Heart right ventricle (tissue), 16 donors: ENCODE measurements at regions of chr17 and their contacts with region 1.

Region 1: DNA sequence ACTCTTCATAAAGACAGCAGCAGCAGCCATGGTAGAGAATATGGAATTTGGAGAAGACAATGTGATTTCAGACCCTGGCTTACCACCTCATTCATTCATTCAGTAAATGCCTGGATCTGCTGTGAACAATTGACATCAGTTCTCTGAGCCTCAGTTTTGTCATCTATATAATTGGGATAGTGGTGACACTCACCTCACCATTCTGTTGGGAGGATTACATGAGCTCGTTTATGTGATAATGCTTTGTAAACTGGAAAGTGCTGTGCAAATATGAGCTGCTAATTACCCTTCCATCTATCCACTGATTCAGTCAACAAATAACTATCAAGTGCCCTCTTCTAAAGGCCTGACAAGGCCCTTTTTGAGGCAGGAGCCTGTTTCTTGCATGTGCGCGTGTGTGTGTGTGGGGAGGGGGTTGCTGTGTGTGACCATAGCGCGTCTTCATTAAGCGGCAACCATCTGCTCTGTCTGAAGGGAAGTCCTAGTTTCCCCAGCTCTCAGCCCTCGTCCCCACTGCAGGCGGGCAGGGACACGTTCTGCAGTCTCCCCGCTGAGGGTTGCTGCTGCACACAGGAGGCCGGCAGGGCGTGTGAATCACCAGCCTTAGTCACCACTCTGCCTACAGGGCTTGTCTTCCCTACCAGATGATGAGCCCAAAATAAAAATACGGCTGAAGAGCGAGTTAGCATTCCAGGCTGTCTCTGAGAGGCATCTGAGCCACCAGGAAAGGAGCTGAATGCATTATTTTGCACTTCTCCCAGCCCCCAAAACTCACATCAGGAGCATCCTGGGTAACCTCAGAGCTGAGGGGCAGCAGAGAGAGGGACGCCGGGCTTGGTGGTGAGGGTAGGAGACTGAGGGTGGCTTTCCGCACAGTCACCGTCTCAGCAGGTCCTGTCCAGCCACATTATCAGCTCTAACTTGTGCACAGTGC is 19.9 kb downstream of the ARL4D start:
- DNase-seq: peak in 1 of 2 donors; percentile 42
- ATAC-seq: peak in 7 of 8 donors; percentile 33 to 88 (median 73)
- H3K4me3 ChIP-seq: no peak overlapping the region
- H3K27ac ChIP-seq: peak overlapping the region in 3 of 10 donors; percentile 7 to 73 (median 66)
- H3K4me1 ChIP-seq: peaks cover 9 to 29% (median 23%) of the 10 kb centered on the region in 9 donors
- H3K27me3 ChIP-seq: peaks cover 0 to under 1% (median 0%) of the 10 kb centered on the region in 7 donors
- CTCF ChIP-seq: no peak

Region 2: DNA sequence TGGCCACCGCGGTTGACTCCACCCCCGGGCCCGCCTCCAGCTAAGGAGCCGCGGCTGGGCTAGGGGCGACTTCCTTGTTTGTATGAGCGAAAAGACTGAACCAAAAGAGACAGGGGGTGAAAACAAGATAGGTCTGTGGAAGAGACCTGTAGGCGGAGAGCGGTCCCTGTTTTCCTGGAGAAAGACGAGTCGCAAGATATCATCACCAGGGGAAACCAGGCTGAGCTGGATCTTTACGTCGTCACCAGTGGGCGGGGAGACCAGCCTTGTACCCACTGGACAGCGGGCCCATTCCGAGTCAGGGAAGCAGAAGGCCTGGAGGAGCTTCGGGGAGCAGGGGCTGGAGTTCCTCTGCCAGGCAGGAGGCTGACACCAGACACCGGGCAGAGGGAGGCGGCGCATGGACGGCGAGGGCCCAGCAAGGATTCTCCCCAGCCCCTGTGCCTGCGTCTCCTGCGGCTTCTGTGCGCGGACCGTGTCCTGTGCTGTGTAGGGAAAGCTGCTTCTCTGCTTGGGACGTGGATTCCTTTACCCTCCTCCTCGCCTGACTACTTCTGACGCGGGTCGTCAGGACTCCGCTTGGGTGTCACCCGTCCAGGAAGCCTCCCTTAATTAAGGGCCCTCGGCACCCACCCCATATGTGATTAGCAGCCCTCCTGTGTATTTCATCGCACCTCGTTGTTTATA is 30.2 kb before region 1 on chr17:
- intact Hi-C with region 1: no loop called
- DNase-seq: peak; percentile 88 to 92
- ATAC-seq: peak; percentile 90 to 95 (median 92)
- H3K4me3 ChIP-seq: peak overlapping the region; percentile 53 to 75 (median 66)
- H3K27ac ChIP-seq: peak overlapping the region; percentile 93 to 99 (median 98)
- H3K4me1 ChIP-seq: peaks cover 0 to 21% (median 11%) of the 10 kb centered on the region in 9 donors
- H3K27me3 ChIP-seq: no peaks in the 10 kb centered on the region
- CTCF ChIP-seq: no peak

Region 3: GRCh38 chr17:43467981-43468581 is 49.4 kb after region 1 on chr17:
- intact Hi-C with region 1: loop called in 1 of 10 experiments (anchors 5 kb)
- DNase-seq: no peak
- ATAC-seq: peak in 6 of 8 donors; percentile 18 to 65 (median 37)
- H3K4me3 ChIP-seq: no peak overlapping the region
- H3K27ac ChIP-seq: peak overlapping the region in 1 of 10 donors; percentile 21
- H3K4me1 ChIP-seq: peaks cover 0 to 18% (median 10%) of the 10 kb centered on the region in 9 donors
- H3K27me3 ChIP-seq: peaks cover 0 to 5% (median 0%) of the 10 kb centered on the region in 7 donors
- CTCF ChIP-seq: no peak